ENCODE measurements at regions of chr7 and their contacts with region 1.

Region 1: GRCh38 chr7:107291438-107291837 is 122.6 kb downstream of the HBP1 start:
- DNase-seq: no peak
- H3K4me3 Mint-ChIP-seq: no peak overlapping the region
- H3K27ac Mint-ChIP-seq: no peak overlapping the region
- H3K4me1 Mint-ChIP-seq: no peaks in the 10 kb centered on the region
- H3K27me3 Mint-ChIP-seq: no peaks in the 10 kb centered on the region

Region 2: DNA sequence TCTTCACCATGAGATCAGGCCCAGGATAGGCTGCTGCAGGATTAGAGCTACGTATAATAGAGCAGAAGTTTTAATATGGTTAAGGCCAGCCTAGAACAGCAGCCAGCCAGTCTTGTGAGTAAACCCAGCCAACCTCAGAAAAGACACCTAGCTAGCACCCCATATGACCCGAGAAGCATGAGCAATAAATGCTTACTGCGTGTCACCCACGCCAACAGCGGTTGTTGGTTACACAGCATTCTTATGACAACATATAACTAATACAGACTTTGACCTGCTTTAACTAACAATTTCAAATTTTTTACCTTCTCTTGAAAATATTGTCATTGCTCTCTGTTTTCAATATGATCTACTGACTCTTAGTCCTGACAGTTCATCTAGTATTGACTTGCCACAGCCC is 16.9 kb before region 1 on chr7:
- intact Hi-C with region 1: loop called (anchors 2 kb)
- DNase-seq: no peak
- H3K4me3 Mint-ChIP-seq: no peak overlapping the region
- H3K27ac Mint-ChIP-seq: no peak overlapping the region
- H3K4me1 Mint-ChIP-seq: no peaks in the 10 kb centered on the region
- H3K27me3 Mint-ChIP-seq: no peaks in the 10 kb centered on the region